SK-N-SH (cell line): ENCODE measurements at regions of chr20 and their contacts with region 1.

Region 1: GRCh38 chr20:31260326-31260932 is 3.0 kb downstream of the DEFB115 start:
- DNase-seq: peak; percentile 29
- H3K4me3 ChIP-seq: no peak overlapping the region; a peak in 1 of 4 replicates
- H3K27ac ChIP-seq: no peak overlapping the region
- H3K4me1 ChIP-seq: no peaks in the 10 kb centered on the region
- H3K27me3 ChIP-seq: no peaks in the 10 kb centered on the region
- CTCF ChIP-seq: peak; percentile 69
- EP300 ChIP-seq: no peak
- RAD21 ChIP-seq: peak; percentile 62

Region 2: DNA sequence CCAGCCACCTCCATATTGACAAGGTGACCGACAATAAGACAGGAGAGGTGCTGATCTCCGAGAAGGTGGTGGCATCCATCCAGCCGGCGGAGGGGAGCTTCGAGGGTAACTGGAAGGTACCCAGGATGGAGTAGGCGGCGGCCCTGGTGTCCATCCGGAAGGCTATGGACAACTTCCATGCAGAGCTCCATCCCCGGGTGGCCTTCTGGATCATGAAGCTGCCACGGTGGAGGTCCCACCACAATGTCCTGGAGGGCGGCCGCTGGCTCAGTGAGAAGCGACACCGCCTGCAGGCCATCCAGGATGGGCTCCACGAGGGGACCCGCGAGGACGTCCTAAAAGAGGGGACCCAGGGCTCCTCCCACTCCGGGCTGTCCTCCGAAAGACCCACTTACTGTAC is 14.0 kb after region 1 on chr20:
- CTCF ChIA-PET with region 1: interaction called, 11 read pairs
- POLR2A ChIA-PET with region 1: no interaction called
- DNase-seq: no peak
- H3K4me3 ChIP-seq: no peak overlapping the region
- H3K27ac ChIP-seq: no peak overlapping the region
- H3K4me1 ChIP-seq: no peaks in the 10 kb centered on the region
- H3K27me3 ChIP-seq: no peaks in the 10 kb centered on the region
- CTCF ChIP-seq: no peak
- EP300 ChIP-seq: no peak
- RAD21 ChIP-seq: no peak

Region 3: DNA sequence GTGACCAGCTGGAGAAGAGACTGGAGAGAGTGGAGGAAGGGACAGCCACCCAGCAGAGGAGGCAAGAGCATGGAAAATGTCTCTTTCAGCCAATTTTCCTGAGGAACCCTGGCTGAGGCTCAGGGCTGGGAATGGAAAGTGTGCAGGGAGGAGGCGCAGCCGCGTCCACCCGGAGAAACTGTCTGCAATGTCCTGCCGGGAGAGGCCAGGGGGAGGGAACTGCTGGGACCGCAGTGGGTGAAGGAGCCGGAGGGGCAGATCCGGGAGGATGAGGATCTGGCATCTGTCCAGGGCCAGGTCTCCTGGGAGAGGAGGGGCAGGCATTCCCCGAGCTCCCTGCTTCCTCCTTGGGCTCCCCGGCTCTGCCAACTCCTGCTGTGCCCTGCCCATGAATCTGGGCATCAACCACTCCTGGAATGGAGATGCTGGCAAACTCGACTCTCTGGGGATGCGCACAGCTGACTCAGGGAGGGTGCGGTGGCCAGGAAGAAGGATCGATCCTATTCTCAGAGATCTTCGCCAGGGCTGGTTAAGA is 236.4 kb after region 1 on chr20:
- CTCF ChIA-PET with region 1: no interaction called
- POLR2A ChIA-PET with region 1: no interaction called
- DNase-seq: no peak
- H3K4me3 ChIP-seq: peak overlapping the region; percentile 9 to 20; a peak in 1 of 4 replicates
- H3K27ac ChIP-seq: peak overlapping the region in 1 of 2 experiments; percentile 65; a peak in 2 of 4 replicates
- H3K4me1 ChIP-seq: peaks cover 2 to 5% of the 10 kb centered on the region in 2 experiments; a peak in 2 of 4 replicates
- H3K27me3 ChIP-seq: no peaks in the 10 kb centered on the region
- CTCF ChIP-seq: no peak
- EP300 ChIP-seq: peak in 1 of 2 experiments; percentile 20; a peak in 1 of 4 replicates
- RAD21 ChIP-seq: no peak